Naive thymus-derived CD4-positive, alpha-beta T cell (primary cell): ENCODE measurements at regions of chr12 and their contacts with region 1.

Region 1: DNA sequence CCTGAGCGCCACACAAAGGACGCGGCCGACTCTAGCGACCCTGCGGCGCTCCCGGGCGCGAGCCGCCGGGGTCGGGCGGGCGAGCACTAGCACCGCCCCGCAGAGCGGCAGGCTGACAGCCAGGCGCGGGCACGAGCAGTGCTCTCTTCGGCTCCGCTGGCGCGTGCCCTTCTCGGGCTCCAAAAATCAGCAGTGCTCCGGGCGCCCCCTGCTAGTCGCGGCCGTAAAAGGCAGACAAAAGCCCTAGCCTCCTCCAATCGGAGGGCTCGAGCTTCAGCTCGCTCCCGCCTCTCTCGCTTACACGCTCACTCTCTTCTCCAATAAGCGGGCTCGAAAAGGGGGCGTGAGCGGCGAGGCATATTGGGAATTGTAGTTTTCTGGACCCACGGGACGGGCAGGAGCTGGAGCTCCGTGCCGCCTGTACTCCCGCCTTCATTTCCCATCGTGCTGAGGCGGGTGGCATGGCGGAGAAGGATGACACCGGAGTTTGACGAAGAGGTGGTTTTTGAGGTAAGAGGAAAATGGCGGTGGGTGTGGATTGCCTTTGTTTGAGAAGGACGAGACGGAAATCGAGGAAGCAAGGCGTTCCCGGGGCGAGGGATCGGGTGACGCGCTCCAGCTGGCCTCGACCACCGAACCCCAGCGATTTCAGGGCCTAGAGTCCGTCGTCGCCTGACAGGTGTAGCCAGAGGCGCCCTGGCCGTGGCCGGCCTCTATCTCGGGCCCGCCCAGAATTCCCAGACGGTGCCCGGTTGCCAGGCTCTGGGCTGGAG is at the starts of genes FGD6 and VEZT:
- DNase-seq: peak; percentile 90 to 99 (median 98)
- ATAC-seq: peak; percentile 94
- H3K4me3 ChIP-seq: peak within 1 kb of the TSS; percentile 87
- H3K4me3 Mint-ChIP-seq: peak within 1 kb of the TSS; percentile 88 to 100 (median 96)
- H3K27ac ChIP-seq: peak within 1 kb of the TSS; percentile 94
- H3K27ac Mint-ChIP-seq: peak within 1 kb of the TSS; percentile 86 to 97 (median 95)
- H3K4me1 ChIP-seq: peaks cover 0 to 8% of the 10 kb centered on the region in 2 donors
- H3K4me1 Mint-ChIP-seq: peaks cover 25 to 53% (median 45%) of the 10 kb centered on the region in 7 donors
- H3K27me3 ChIP-seq: no peaks in the 10 kb centered on the region
- H3K27me3 Mint-ChIP-seq: peaks cover 0 to 20% (median 7%) of the 10 kb centered on the region in 5 donors
- total RNA-seq, gene FGD6: 0.70 to 8.6 (median 1.1) TPM
- total RNA-seq, gene VEZT: 37.2 to 48.8 (median 44.2) TPM

Region 2: GRCh38 chr12:94133964-94134795 is 1083.4 kb before region 1 on chr12:
- CTCF ChIA-PET with region 1: no interaction called
- POLR2A ChIA-PET with region 1: no interaction called
- intact Hi-C with region 1: loop called in 1 of 2 experiments (anchors 5 kb)
- DNase-seq: peak in 7 of 9 donors; percentile 34 to 65 (median 59)
- ATAC-seq: peak; percentile 97
- H3K4me3 ChIP-seq: no peak overlapping the region
- H3K4me3 Mint-ChIP-seq: no peak overlapping the region
- H3K27ac ChIP-seq: no peak overlapping the region
- H3K27ac Mint-ChIP-seq: peak overlapping the region in 2 of 9 donors; percentile 16 to 28
- H3K4me1 ChIP-seq: no peaks in the 10 kb centered on the region
- H3K4me1 Mint-ChIP-seq: peaks cover 0 to 10% (median 4%) of the 10 kb centered on the region in 7 donors
- H3K27me3 ChIP-seq: no peaks in the 10 kb centered on the region
- H3K27me3 Mint-ChIP-seq: peaks cover 0 to 11% (median 0%) of the 10 kb centered on the region in 5 donors

Region 3: DNA sequence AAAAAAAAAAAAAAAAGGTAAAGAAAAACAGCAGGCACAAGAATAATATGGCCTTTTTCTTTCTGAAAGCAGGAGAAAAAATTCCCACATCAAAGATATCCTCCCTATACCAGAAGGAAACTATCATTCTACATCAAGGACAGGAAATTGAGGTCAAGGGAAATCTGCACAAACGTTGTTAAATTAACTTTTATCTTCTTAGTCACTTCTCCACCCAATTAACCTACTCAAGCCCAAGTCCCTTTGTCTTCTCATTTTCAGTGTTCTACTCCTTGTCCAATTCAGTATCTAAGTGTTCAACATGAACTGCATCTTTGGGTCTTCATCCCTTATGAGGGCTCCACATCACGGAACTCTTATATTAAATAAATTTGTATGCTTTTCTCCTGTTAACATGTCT is 229.8 kb before region 1 on chr12:
- CTCF ChIA-PET with region 1: no interaction called
- POLR2A ChIA-PET with region 1: no interaction called
- intact Hi-C with region 1: loop called in 1 of 2 experiments (anchors 1 kb)
- DNase-seq: peak in 7 of 9 donors; percentile 58 to 75 (median 73)
- ATAC-seq: peak; percentile 72
- H3K4me3 ChIP-seq: no peak overlapping the region
- H3K4me3 Mint-ChIP-seq: peak overlapping the region; percentile 42 to 90 (median 64)
- H3K27ac ChIP-seq: peak overlapping the region; percentile 52
- H3K27ac Mint-ChIP-seq: peak overlapping the region; percentile 50 to 99 (median 97)
- H3K4me1 ChIP-seq: peaks cover 25 to 61% of the 10 kb centered on the region in 2 donors
- H3K4me1 Mint-ChIP-seq: peaks cover 40 to 95% (median 77%) of the 10 kb centered on the region in 7 donors
- H3K27me3 ChIP-seq: no peaks in the 10 kb centered on the region
- H3K27me3 Mint-ChIP-seq: no peaks in the 10 kb centered on the region

Region 4: GRCh38 chr12:95117178-95117599 is 100.4 kb before region 1 on chr12:
- CTCF ChIA-PET with region 1: interaction called, 7 read pairs
- POLR2A ChIA-PET with region 1: interaction called, 5 read pairs
- intact Hi-C with region 1: loop called (anchors 1 kb)
- DNase-seq: peak; percentile 16 to 77 (median 67)
- ATAC-seq: peak; percentile 87
- H3K4me3 ChIP-seq: no peak overlapping the region
- H3K4me3 Mint-ChIP-seq: no peak overlapping the region
- H3K27ac ChIP-seq: no peak overlapping the region
- H3K27ac Mint-ChIP-seq: no peak overlapping the region
- H3K4me1 ChIP-seq: no peaks in the 10 kb centered on the region
- H3K4me1 Mint-ChIP-seq: peaks cover 0 to 7% (median 0%) of the 10 kb centered on the region in 7 donors
- H3K27me3 ChIP-seq: no peaks in the 10 kb centered on the region
- H3K27me3 Mint-ChIP-seq: no peaks in the 10 kb centered on the region

Region 5: GRCh38 chr12:95532851-95533250 is 315.3 kb after region 1 on chr12:
- CTCF ChIA-PET with region 1: interaction called, 4 read pairs
- POLR2A ChIA-PET with region 1: no interaction called
- intact Hi-C with region 1: loop called in 1 of 2 experiments (anchors 1 kb)
- DNase-seq: no peak
- ATAC-seq: no peak
- H3K4me3 ChIP-seq: no peak overlapping the region
- H3K4me3 Mint-ChIP-seq: no peak overlapping the region
- H3K27ac ChIP-seq: no peak overlapping the region
- H3K27ac Mint-ChIP-seq: no peak overlapping the region
- H3K4me1 ChIP-seq: no peaks in the 10 kb centered on the region
- H3K4me1 Mint-ChIP-seq: peaks cover 3 to 40% (median 9%) of the 10 kb centered on the region in 7 donors
- H3K27me3 ChIP-seq: no peaks in the 10 kb centered on the region
- H3K27me3 Mint-ChIP-seq: no peaks in the 10 kb centered on the region

Region 6: GRCh38 chr12:96035278-96036236 is 818.0 kb after region 1 on chr12 and contains the start of gene LTA4H:
- CTCF ChIA-PET with region 1: no interaction called
- POLR2A ChIA-PET with region 1: no interaction called
- intact Hi-C with region 1: loop called (anchors 1 kb)
- DNase-seq: peak; percentile 86 to 99 (median 97)
- ATAC-seq: peak; percentile 97
- H3K4me3 ChIP-seq: peak within 1 kb of the TSS; percentile 85
- H3K4me3 Mint-ChIP-seq: no peak within 1 kb of the TSS
- H3K27ac ChIP-seq: peak within 1 kb of the TSS; percentile 81
- H3K27ac Mint-ChIP-seq: no peak within 1 kb of the TSS
- H3K4me1 ChIP-seq: peaks cover 4 to 9% of the 10 kb centered on the region in 2 donors
- H3K4me1 Mint-ChIP-seq: peaks cover 5 to 19% (median 17%) of the 10 kb centered on the region in 7 donors
- H3K27me3 ChIP-seq: no peaks in the 10 kb centered on the region
- H3K27me3 Mint-ChIP-seq: no peaks in the 10 kb centered on the region
- total RNA-seq, gene LTA4H: 52.5 to 151 (median 63.4) TPM